ENCODE measurements at regions of chr10 and their contacts with region 1.

Region 1: GRCh38 chr10:94439275-94439861 is 37.0 kb downstream of the TBC1D12 start:
- DNase-seq: peak in 1 of 2 experiments; percentile 14
- ATAC-seq: peak; percentile 30 to 60; a peak in 4 of 6 replicates
- H3K4me3 ChIP-seq: no peak overlapping the region
- H3K27ac ChIP-seq: no peak overlapping the region
- H3K4me1 ChIP-seq: no peaks in the 10 kb centered on the region
- CTCF ChIP-seq: no peak
- EP300 ChIP-seq: no peak
- POLR2A ChIP-seq: no peak
- RAD21 ChIP-seq: peak in 1 of 2 experiments; percentile 29; a peak in 1 of 5 replicates

Region 2: GRCh38 chr10:94287336-94287735 is 152.0 kb before region 1 on chr10:
- CTCF ChIA-PET with region 1: interaction called, 10 read pairs
- POLR2A ChIA-PET with region 1: no interaction called
- DNase-seq: no peak
- ATAC-seq: no peak
- H3K4me3 ChIP-seq: no peak overlapping the region
- H3K27ac ChIP-seq: no peak overlapping the region
- H3K4me1 ChIP-seq: no peaks in the 10 kb centered on the region
- CTCF ChIP-seq: no peak
- EP300 ChIP-seq: no peak
- POLR2A ChIP-seq: no peak
- RAD21 ChIP-seq: no peak

Region 3: DNA sequence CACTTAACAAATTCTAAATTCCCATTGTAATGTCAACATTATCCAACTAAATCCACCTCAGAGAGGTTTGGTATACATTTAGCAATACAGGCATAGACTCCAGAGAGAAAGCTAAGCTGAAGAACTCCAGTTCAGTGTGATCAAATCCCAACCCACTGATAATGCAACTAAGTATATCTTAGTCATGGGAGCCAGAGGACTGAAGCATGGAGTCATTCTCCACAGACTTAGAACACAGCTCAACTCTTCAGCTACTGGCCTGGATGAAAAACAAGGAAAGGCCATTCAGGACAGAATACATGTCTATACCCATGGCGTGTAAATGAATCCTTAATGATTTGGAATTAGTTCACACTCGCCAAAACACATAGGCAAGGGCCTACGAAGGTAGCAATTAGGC is 104.5 kb before region 1 on chr10:
- CTCF ChIA-PET with region 1: interaction called, 12 read pairs
- POLR2A ChIA-PET with region 1: no interaction called
- DNase-seq: no peak
- ATAC-seq: no peak
- H3K4me3 ChIP-seq: no peak overlapping the region
- H3K27ac ChIP-seq: no peak overlapping the region
- H3K4me1 ChIP-seq: peaks cover 7% of the 10 kb centered on the region; the same call in 1 of the 3 replicates
- CTCF ChIP-seq: no peak
- EP300 ChIP-seq: no peak
- POLR2A ChIP-seq: no peak
- RAD21 ChIP-seq: no peak

Region 4: DNA sequence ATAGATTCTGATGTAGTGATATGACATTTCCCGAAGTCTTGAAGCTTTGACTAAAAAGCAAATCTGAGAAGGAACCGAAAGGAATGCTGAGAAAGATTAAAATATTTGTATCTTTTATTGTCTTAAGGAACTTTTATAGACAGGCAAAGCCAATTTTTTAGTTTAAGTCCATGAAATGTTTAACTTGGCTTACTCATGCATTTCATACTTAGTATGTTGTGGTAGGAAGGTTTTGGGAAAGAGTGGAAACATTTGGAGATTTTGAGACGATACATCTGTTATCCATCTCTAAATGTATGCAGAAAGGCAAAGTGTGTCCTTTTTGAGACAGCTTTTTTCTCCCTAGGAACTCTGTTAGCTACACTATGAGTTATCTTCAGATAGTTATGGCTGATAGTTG is 26.9 kb before region 1 on chr10:
- CTCF ChIA-PET with region 1: interaction called, 17 read pairs
- POLR2A ChIA-PET with region 1: no interaction called
- DNase-seq: no peak
- ATAC-seq: no peak
- H3K4me3 ChIP-seq: no peak overlapping the region
- H3K27ac ChIP-seq: no peak overlapping the region
- H3K4me1 ChIP-seq: peaks cover 11% of the 10 kb centered on the region; the same call in 1 of the 3 replicates
- CTCF ChIP-seq: no peak
- EP300 ChIP-seq: no peak
- POLR2A ChIP-seq: no peak
- RAD21 ChIP-seq: no peak

Region 5: GRCh38 chr10:94459385-94459784 is 20.0 kb after region 1 on chr10:
- CTCF ChIA-PET with region 1: interaction called, 12 read pairs
- POLR2A ChIA-PET with region 1: no interaction called
- DNase-seq: no peak
- ATAC-seq: no peak
- H3K4me3 ChIP-seq: no peak overlapping the region
- H3K27ac ChIP-seq: no peak overlapping the region
- H3K4me1 ChIP-seq: no peaks in the 10 kb centered on the region
- CTCF ChIP-seq: no peak
- EP300 ChIP-seq: no peak
- POLR2A ChIP-seq: no peak
- RAD21 ChIP-seq: no peak

Region 6: DNA sequence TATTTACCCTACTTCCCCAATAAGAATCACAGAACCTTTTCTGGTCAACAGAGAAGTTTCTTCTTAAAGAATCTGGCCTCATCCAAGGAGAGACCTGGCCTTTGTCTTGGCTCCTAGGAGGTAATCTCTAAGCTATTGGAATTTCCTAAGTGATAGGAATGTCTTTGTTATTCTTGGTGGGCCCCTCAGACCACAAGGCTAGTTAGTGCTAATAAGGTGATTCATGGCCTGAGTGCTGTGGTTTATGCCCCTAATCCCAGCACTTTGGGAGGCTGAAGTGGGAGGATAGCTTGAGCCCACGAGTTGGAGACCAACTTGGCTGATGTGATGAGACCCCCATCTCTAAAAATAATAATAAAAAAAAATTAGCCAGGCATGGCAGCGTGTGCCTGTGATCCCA is 184.2 kb after region 1 on chr10:
- CTCF ChIA-PET with region 1: no interaction called
- POLR2A ChIA-PET with region 1: no interaction called
- DNase-seq: no peak
- ATAC-seq: no peak
- H3K4me3 ChIP-seq: no peak overlapping the region
- H3K27ac ChIP-seq: no peak overlapping the region
- H3K4me1 ChIP-seq: no peaks in the 10 kb centered on the region
- CTCF ChIP-seq: no peak
- EP300 ChIP-seq: no peak
- POLR2A ChIP-seq: no peak
- RAD21 ChIP-seq: no peak

Measured in A549 (cell line).